CD8-positive, alpha-beta T cell (primary cell): ENCODE measurements at regions of chr6 and their contacts with region 1.

Region 1: GRCh38 chr6:43143235-43144124 is 27.6 kb upstream of the SRF start:
- DNase-seq: peak; percentile 64 to 90 (median 79)
- ATAC-seq: peak; percentile 74
- H3K4me3 ChIP-seq: peak overlapping the region; percentile 40 to 48
- H3K4me3 Mint-ChIP-seq: peak overlapping the region; percentile 87
- H3K27ac ChIP-seq: peak overlapping the region; percentile 67 to 73
- H3K27ac Mint-ChIP-seq: peak overlapping the region; percentile 99
- H3K4me1 ChIP-seq: peaks cover 30% of the 10 kb centered on the region
- H3K4me1 Mint-ChIP-seq: peaks cover 32% of the 10 kb centered on the region
- H3K27me3 ChIP-seq: no peaks in the 10 kb centered on the region
- H3K27me3 Mint-ChIP-seq: no peaks in the 10 kb centered on the region
- CTCF ChIP-seq: peak; percentile 80

Region 2: DNA sequence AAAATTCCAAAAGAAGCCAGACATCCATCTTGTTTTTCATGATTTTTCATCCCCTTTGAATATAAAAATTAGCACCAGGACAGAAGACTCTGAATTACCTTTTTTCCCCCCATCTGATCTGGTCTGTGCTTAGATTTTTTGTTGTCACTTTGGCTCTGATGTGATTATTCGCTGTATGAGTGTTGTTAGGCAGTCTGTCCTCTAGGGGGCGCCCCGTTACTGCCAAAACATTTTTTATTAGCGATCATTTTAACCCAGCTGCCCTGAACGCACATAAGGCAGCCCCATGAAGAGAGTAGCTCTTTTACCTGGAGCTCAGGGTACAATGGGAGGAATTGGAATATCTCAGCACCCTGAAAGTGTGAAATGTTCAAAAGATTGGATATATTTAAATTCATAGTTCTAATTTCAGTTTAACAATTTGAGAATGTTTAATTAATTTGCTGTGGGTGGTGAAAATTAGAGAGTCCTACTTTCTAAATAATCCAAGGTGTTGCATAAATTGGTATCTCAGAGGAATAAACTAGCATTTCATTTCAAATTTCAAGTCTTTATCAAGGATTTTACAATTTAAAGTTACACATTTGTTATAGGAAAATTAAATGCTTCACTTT is 481.8 kb before region 1 on chr6:
- CTCF ChIA-PET with region 1: interaction called, 14 read pairs
- POLR2A ChIA-PET with region 1: interaction called, 4 read pairs
- intact Hi-C with region 1: loop called (anchors 2 to 5 kb)
- DNase-seq: peak; percentile 75 to 93 (median 84)
- ATAC-seq: peak; percentile 99
- H3K4me3 ChIP-seq: no peak overlapping the region
- H3K4me3 Mint-ChIP-seq: no peak overlapping the region
- H3K27ac ChIP-seq: no peak overlapping the region
- H3K27ac Mint-ChIP-seq: peak overlapping the region; percentile 2
- H3K4me1 ChIP-seq: no peaks in the 10 kb centered on the region
- H3K4me1 Mint-ChIP-seq: peaks cover 2% of the 10 kb centered on the region
- H3K27me3 ChIP-seq: no peaks in the 10 kb centered on the region
- H3K27me3 Mint-ChIP-seq: no peaks in the 10 kb centered on the region
- CTCF ChIP-seq: peak; percentile 90

Region 3: GRCh38 chr6:42704241-42704936 is 439.1 kb before region 1 on chr6:
- CTCF ChIA-PET with region 1: no interaction called
- POLR2A ChIA-PET with region 1: no interaction called
- intact Hi-C with region 1: no loop called
- DNase-seq: no peak
- ATAC-seq: no peak
- H3K4me3 ChIP-seq: no peak overlapping the region
- H3K4me3 Mint-ChIP-seq: no peak overlapping the region
- H3K27ac ChIP-seq: no peak overlapping the region
- H3K27ac Mint-ChIP-seq: no peak overlapping the region
- H3K4me1 ChIP-seq: no peaks in the 10 kb centered on the region
- H3K4me1 Mint-ChIP-seq: no peaks in the 10 kb centered on the region
- H3K27me3 ChIP-seq: no peaks in the 10 kb centered on the region
- H3K27me3 Mint-ChIP-seq: no peaks in the 10 kb centered on the region
- CTCF ChIP-seq: no peak

Region 4: GRCh38 chr6:42901536-42901957 is 241.9 kb before region 1 on chr6:
- CTCF ChIA-PET with region 1: interaction called, 124 read pairs
- POLR2A ChIA-PET with region 1: interaction called, 10 read pairs
- intact Hi-C with region 1: loop called (anchors 1 kb)
- DNase-seq: peak; percentile 32 to 89 (median 67)
- ATAC-seq: peak; percentile 100
- H3K4me3 ChIP-seq: no peak overlapping the region
- H3K4me3 Mint-ChIP-seq: peak overlapping the region; percentile 63
- H3K27ac ChIP-seq: no peak overlapping the region
- H3K27ac Mint-ChIP-seq: no peak overlapping the region
- H3K4me1 ChIP-seq: peaks cover 6% of the 10 kb centered on the region
- H3K4me1 Mint-ChIP-seq: peaks cover 17% of the 10 kb centered on the region
- H3K27me3 ChIP-seq: no peaks in the 10 kb centered on the region
- H3K27me3 Mint-ChIP-seq: no peaks in the 10 kb centered on the region
- CTCF ChIP-seq: peak; percentile 92

Region 5: GRCh38 chr6:42963855-42964605 is 179.4 kb before region 1 on chr6:
- CTCF ChIA-PET with region 1: interaction called, 12 read pairs
- POLR2A ChIA-PET with region 1: no interaction called
- intact Hi-C with region 1: loop called in 1 of 2 experiments (anchors 2 kb)
- DNase-seq: peak in 4 of 9 experiments; percentile 28 to 56 (median 45)
- ATAC-seq: peak; percentile 43
- H3K4me3 ChIP-seq: no peak overlapping the region
- H3K4me3 Mint-ChIP-seq: no peak overlapping the region
- H3K27ac ChIP-seq: no peak overlapping the region
- H3K27ac Mint-ChIP-seq: no peak overlapping the region
- H3K4me1 ChIP-seq: peaks cover 10% of the 10 kb centered on the region
- H3K4me1 Mint-ChIP-seq: peaks cover 15% of the 10 kb centered on the region
- H3K27me3 ChIP-seq: no peaks in the 10 kb centered on the region
- H3K27me3 Mint-ChIP-seq: no peaks in the 10 kb centered on the region
- CTCF ChIP-seq: no peak

Region 6: DNA sequence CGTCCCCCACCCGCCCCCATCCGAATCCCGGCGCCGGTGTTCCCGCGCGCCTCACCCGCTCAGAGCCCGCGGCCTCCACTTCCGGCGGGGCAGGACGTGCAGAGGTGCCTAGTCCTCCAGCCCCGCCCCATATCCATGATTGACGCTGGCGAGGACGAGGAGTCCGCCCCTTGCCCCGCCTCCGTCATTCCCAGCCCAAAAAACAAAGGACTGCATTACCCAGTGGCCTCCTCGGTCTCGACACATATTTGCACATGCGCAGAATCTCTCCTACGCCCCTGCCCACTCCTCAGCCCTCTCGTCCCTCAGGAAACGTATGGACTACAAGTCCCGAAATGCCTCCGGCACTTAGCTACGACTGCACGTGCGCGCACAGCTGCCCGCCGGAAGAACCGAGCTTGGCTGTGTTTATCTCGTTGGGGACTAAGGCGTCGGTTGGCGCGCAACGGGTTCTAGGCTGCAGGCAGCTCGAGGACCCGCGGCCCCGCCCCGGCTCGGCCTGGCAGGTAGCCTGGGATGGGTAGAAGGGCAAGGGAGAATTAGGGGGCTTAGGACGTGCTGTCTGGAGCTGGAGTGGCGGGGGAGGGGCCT is 129.5 kb before region 1 on chr6 and contains the starts of genes KLHDC3 and MEA1:
- CTCF ChIA-PET with region 1: interaction called, 15 read pairs
- POLR2A ChIA-PET with region 1: interaction called, 11 read pairs
- intact Hi-C with region 1: loop called (anchors 1 kb)
- DNase-seq: peak; percentile 95 to 100 (median 98)
- ATAC-seq: peak; percentile 96
- H3K4me3 ChIP-seq: peak within 1 kb of the TSS; percentile 79 to 84
- H3K4me3 Mint-ChIP-seq: peak within 1 kb of the TSS; percentile 95
- H3K27ac ChIP-seq: peak within 1 kb of the TSS; percentile 60 to 74
- H3K27ac Mint-ChIP-seq: peak within 1 kb of the TSS; percentile 94
- H3K4me1 ChIP-seq: peaks cover 29% of the 10 kb centered on the region
- H3K4me1 Mint-ChIP-seq: peaks cover 63% of the 10 kb centered on the region
- H3K27me3 ChIP-seq: no peaks in the 10 kb centered on the region
- H3K27me3 Mint-ChIP-seq: no peaks in the 10 kb centered on the region
- CTCF ChIP-seq: no peak
- total RNA-seq, gene KLHDC3: 20.9 to 21.7 TPM
- total RNA-seq, gene MEA1: 14.5 to 15.3 TPM

Region 7: DNA sequence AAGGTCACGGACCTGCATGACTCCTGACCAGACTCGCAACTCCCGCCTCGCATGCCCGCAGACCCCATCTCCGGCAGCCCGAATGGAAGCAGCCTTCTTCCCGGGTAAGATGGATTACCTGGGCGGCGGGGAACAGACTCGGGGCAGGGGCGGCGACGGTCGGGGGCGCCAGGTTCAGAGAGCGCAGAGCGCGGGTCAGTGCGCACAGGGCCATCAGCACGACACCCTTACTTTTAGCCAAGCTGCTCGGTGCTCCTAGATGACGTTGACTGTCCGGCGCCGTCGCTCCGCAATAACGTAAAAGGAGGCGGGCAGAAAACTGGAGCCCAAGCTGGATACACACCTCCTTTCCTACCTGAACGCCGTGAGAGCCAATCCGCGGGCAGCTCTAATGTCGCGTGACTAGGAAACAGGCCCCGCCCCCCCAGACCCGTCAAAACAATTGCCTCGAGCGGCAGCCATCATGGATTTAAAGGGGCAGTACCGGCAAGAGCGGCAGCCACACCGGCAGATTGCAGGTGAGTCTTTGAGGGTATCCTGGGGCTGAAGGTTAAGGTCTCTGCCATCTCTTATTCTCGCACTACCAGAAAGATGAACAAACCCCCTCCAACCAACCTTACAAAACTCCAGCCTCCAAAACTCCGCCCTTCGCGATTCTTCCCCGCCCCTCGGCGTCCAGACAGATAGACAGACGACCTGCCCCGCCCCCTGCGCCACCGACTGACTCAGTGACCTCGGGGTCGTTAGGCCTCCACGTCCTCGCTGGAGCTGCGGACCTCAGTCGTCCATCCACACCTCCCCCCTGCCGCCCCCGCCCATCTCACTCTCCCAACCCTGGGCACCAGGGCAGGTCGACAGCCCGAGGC is 84.1 kb before region 1 on chr6 and contains the starts of genes KLC4 and MRPL2:
- CTCF ChIA-PET with region 1: interaction called, 6 read pairs
- POLR2A ChIA-PET with region 1: interaction called, 7 read pairs
- intact Hi-C with region 1: loop called in 1 of 2 experiments (anchors 2 kb)
- DNase-seq: peak; percentile 94 to 99 (median 98)
- ATAC-seq: peak; percentile 97
- H3K4me3 ChIP-seq: peak within 1 kb of the TSS; percentile 81 to 96
- H3K4me3 Mint-ChIP-seq: peak within 1 kb of the TSS; percentile 95
- H3K27ac ChIP-seq: peak within 1 kb of the TSS; percentile 84 to 91
- H3K27ac Mint-ChIP-seq: peak within 1 kb of the TSS; percentile 99
- H3K4me1 ChIP-seq: peaks cover 19% of the 10 kb centered on the region
- H3K4me1 Mint-ChIP-seq: peaks cover 44% of the 10 kb centered on the region
- H3K27me3 ChIP-seq: no peaks in the 10 kb centered on the region
- H3K27me3 Mint-ChIP-seq: no peaks in the 10 kb centered on the region
- CTCF ChIP-seq: no peak
- total RNA-seq, gene KLC4: 42.1 to 57.4 TPM
- total RNA-seq, gene MRPL2: 38.9 to 41.6 TPM

Region 8: GRCh38 chr6:43174263-43175112 is 31.0 kb after region 1 on chr6:
- CTCF ChIA-PET with region 1: interaction called, 6 read pairs
- POLR2A ChIA-PET with region 1: interaction called, 8 read pairs
- intact Hi-C with region 1: loop called (anchors 1 to 2 kb)
- DNase-seq: peak; percentile 77 to 98 (median 92)
- ATAC-seq: peak; percentile 52
- H3K4me3 ChIP-seq: peak overlapping the region; percentile 4 to 50
- H3K4me3 Mint-ChIP-seq: peak overlapping the region; percentile 63
- H3K27ac ChIP-seq: peak overlapping the region; percentile 62 to 89
- H3K27ac Mint-ChIP-seq: peak overlapping the region; percentile 95
- H3K4me1 ChIP-seq: peaks cover 40% of the 10 kb centered on the region
- H3K4me1 Mint-ChIP-seq: peaks cover 45% of the 10 kb centered on the region
- H3K27me3 ChIP-seq: no peaks in the 10 kb centered on the region
- H3K27me3 Mint-ChIP-seq: no peaks in the 10 kb centered on the region
- CTCF ChIP-seq: no peak